Common myeloid progenitor, CD34-positive (primary cell): ENCODE measurements at regions of chr1 and their contacts with region 1.

Region 1: GRCh38 chr1:201739492-201740085 is 89.4 kb upstream of the IPO9 start:
- DNase-seq: peak; percentile 42 to 78 (median 68)
- H3K4me3 ChIP-seq: peak overlapping the region; percentile 42 to 90 (median 71)
- H3K27ac ChIP-seq: no peak overlapping the region
- H3K4me1 ChIP-seq: peaks cover 3 to 28% (median 21%) of the 10 kb centered on the region in 4 experiments
- H3K27me3 ChIP-seq: peaks cover 0 to 2% (median 0%) of the 10 kb centered on the region in 5 experiments

Region 2: DNA sequence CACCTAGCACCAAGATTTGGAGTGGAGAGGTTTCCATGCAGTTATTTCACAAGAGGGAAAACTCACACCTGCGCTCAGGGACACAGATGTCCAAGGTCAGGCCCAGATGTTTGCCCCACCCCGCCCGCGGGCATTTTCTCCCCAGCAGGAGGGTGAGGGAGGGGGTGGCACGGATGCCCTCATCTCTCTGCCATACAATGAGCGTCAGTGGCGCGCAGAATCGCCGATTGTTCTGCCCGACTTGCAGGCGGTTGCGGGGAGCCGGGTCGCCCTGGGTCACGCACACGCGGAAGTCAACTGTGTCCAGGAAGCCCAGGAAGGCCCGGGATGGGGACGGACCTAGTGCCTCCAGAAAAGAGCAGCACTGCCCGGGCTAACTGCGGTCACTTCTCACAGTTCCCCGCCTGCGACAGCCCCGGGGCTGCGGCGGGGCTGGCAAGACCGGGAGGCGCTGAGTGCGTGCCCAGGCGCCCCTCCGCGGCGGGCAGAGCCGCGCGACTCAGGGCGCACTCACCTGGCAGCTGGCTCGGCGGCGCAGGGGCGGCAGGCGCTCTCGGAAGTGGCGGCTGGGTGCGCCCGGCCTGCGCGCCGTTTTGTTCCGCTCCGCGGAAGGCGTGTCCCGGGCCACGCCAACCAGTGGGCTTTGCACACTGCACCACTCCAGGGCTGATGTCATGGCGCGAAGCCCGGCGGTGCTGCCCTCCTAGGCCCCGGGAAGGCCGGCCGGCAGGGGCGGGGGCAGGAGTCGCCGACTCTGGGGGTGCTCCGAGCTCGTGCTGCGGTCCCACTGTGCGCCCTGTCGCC is 232.8 kb before region 1 on chr1 and contains the start of gene CSRP1:
- CTCF ChIA-PET with region 1: no interaction called
- POLR2A ChIA-PET with region 1: no interaction called
- DNase-seq: peak; percentile 80 to 91 (median 87)
- H3K4me3 ChIP-seq: peak within 1 kb of the TSS; percentile 67 to 86 (median 76)
- H3K27ac ChIP-seq: peak within 1 kb of the TSS; percentile 54 to 72
- H3K4me1 ChIP-seq: peaks cover 1 to 53% (median 43%) of the 10 kb centered on the region in 4 experiments
- H3K27me3 ChIP-seq: no peaks in the 10 kb centered on the region

Region 3: GRCh38 chr1:201719812-201720521 is 19.6 kb before region 1 on chr1:
- CTCF ChIA-PET with region 1: interaction called, 12 read pairs
- POLR2A ChIA-PET with region 1: interaction called, 3 read pairs
- DNase-seq: no peak
- H3K4me3 ChIP-seq: no peak overlapping the region
- H3K27ac ChIP-seq: no peak overlapping the region
- H3K4me1 ChIP-seq: peaks cover 5 to 21% (median 13%) of the 10 kb centered on the region in 4 experiments
- H3K27me3 ChIP-seq: no peaks in the 10 kb centered on the region

Region 4: GRCh38 chr1:201828820-201829774 is 89.5 kb after region 1 on chr1 and contains the start of gene IPO9:
- CTCF ChIA-PET with region 1: no interaction called
- POLR2A ChIA-PET with region 1: no interaction called
- DNase-seq: peak; percentile 93 to 98 (median 96)
- H3K4me3 ChIP-seq: peak within 1 kb of the TSS; percentile 83 to 98 (median 94)
- H3K27ac ChIP-seq: peak within 1 kb of the TSS; percentile 85 to 90
- H3K4me1 ChIP-seq: peaks cover 9 to 24% (median 22%) of the 10 kb centered on the region in 4 experiments
- H3K27me3 ChIP-seq: no peaks in the 10 kb centered on the region